Activated CD8-positive, alpha-beta T cell treated with anti-CD3 and anti-CD28 coated beads for 36 hours (primary cell): ENCODE measurements at regions of chr3 and their contacts with region 1.

Region 1: DNA sequence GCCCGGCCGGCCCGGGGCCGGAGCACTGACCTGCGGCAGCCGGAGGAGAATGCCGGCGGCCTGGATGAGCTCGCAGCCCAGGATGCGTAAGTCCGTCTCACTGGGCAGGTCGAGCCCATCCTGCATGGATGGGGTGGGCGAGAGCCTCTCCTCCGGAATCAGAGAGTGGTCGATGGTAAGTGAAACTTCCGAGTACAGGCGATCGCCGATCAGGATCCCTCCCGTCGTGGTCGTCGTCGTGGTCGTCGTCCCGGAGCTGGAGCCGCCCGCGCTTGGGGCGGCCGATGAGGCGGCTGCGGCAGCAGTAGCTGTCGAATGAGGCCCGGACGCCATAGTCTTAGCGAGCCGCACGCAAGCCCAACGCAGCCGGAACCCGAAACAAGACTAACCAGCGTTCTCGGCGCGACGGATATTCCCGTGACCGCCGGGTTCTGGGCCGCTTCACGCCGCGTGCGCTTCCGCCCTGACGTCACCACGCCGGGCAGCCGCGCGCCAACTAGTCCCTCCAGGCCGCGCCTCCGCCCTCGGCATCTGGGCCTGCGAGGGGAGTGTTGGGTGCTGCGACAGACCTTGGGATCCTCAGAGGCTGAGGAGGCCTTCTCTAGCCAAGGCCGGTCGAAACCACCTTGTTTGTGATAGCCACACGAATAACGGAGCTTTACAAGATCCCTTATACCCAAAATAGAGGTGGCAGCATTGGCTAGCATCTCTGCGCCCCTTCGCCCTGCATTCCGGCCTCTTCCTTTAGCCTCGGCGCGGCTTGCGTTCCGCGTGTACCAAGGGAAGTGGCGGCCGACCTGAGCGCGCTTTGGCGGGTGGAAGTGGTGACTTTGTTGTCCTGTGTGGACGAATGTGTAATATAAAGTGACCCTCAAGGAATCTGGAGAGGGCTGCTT is at the start of gene CCNL1:
- DNase-seq: peak; percentile 96
- ATAC-seq: peak; percentile 79
- H3K4me3 Mint-ChIP-seq: peak within 1 kb of the TSS; percentile 97
- H3K27ac Mint-ChIP-seq: peak within 1 kb of the TSS; percentile 99
- H3K4me1 Mint-ChIP-seq: peaks cover 45% of the 10 kb centered on the region
- H3K27me3 Mint-ChIP-seq: no peaks in the 10 kb centered on the region
- CTCF ChIP-seq: no peak
- total RNA-seq, gene CCNL1: 180 to 191 TPM

Region 2: GRCh38 chr3:157130467-157131251 is 29.4 kb before region 1 on chr3:
- CTCF ChIA-PET with region 1: interaction called, 3 read pairs
- POLR2A ChIA-PET with region 1: interaction called, 26 read pairs
- intact Hi-C with region 1: no loop called
- DNase-seq: peak; percentile 90
- ATAC-seq: peak; percentile 26
- H3K4me3 Mint-ChIP-seq: peak overlapping the region; percentile 50
- H3K27ac Mint-ChIP-seq: peak overlapping the region; percentile 96
- H3K4me1 Mint-ChIP-seq: peaks cover 74% of the 10 kb centered on the region
- H3K27me3 Mint-ChIP-seq: no peaks in the 10 kb centered on the region
- CTCF ChIP-seq: peak; percentile 77

Region 3: GRCh38 chr3:157148196-157148889 is 11.7 kb before region 1 on chr3:
- CTCF ChIA-PET with region 1: interaction called, 6 read pairs
- POLR2A ChIA-PET with region 1: interaction called, 106 read pairs
- intact Hi-C with region 1: no loop called
- DNase-seq: no peak
- ATAC-seq: peak; percentile 22
- H3K4me3 Mint-ChIP-seq: no peak overlapping the region
- H3K27ac Mint-ChIP-seq: peak overlapping the region; percentile 73
- H3K4me1 Mint-ChIP-seq: peaks cover 46% of the 10 kb centered on the region
- H3K27me3 Mint-ChIP-seq: no peaks in the 10 kb centered on the region
- CTCF ChIP-seq: no peak

Region 4: GRCh38 chr3:157180262-157180661 is 20.3 kb after region 1 on chr3:
- CTCF ChIA-PET with region 1: interaction called, 47 read pairs
- POLR2A ChIA-PET with region 1: interaction called, 403 read pairs
- intact Hi-C with region 1: loop called (anchors 1 kb)
- DNase-seq: no peak
- ATAC-seq: no peak
- H3K4me3 Mint-ChIP-seq: no peak overlapping the region
- H3K27ac Mint-ChIP-seq: no peak overlapping the region
- H3K4me1 Mint-ChIP-seq: peaks cover 24% of the 10 kb centered on the region
- H3K27me3 Mint-ChIP-seq: no peaks in the 10 kb centered on the region
- CTCF ChIP-seq: no peak

Region 5: DNA sequence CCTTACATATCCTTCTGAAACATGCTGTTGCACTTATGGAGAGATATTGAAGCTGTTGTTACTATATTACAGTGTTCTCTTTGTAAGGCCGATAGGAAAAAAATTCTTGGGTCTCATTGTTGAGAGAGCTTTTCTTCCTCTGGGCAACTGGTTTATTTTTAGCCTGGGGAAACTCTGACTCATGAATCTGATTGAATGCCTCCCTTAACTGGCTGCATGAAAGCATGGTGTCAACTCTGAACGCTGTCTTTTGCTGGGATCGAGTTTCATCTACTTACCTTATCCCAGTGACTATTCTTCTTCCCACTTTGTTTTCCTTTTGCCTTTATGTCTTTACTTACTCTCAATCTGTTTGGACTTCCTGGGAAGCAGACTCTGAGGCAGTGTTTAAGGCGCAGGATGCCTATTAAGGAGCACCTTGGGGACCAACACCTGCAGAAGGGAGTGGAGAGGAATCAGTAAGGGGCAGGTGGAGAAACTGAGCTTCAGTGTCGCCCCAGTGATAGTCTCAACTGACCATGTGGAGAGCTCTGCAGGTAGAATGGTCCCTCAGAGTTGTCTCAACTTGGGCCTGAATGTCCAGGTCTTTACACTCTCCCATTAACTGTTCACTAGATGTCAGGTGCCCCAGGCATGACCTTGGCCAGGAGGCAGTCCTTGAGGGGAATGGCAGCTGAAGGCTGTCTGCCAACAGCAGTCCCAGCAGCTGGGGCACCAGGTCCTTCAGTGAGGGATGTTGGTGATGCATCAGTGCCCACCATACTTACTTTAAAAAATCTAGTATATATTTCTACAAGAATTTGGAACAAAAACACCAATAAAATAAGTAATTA is 88.8 kb after region 1 on chr3:
- CTCF ChIA-PET with region 1: no interaction called
- POLR2A ChIA-PET with region 1: no interaction called
- intact Hi-C with region 1: no loop called
- DNase-seq: no peak
- ATAC-seq: peak; percentile 42
- H3K4me3 Mint-ChIP-seq: no peak overlapping the region
- H3K27ac Mint-ChIP-seq: no peak overlapping the region
- H3K4me1 Mint-ChIP-seq: peaks cover 9% of the 10 kb centered on the region
- H3K27me3 Mint-ChIP-seq: no peaks in the 10 kb centered on the region
- CTCF ChIP-seq: no peak

Region 6: DNA sequence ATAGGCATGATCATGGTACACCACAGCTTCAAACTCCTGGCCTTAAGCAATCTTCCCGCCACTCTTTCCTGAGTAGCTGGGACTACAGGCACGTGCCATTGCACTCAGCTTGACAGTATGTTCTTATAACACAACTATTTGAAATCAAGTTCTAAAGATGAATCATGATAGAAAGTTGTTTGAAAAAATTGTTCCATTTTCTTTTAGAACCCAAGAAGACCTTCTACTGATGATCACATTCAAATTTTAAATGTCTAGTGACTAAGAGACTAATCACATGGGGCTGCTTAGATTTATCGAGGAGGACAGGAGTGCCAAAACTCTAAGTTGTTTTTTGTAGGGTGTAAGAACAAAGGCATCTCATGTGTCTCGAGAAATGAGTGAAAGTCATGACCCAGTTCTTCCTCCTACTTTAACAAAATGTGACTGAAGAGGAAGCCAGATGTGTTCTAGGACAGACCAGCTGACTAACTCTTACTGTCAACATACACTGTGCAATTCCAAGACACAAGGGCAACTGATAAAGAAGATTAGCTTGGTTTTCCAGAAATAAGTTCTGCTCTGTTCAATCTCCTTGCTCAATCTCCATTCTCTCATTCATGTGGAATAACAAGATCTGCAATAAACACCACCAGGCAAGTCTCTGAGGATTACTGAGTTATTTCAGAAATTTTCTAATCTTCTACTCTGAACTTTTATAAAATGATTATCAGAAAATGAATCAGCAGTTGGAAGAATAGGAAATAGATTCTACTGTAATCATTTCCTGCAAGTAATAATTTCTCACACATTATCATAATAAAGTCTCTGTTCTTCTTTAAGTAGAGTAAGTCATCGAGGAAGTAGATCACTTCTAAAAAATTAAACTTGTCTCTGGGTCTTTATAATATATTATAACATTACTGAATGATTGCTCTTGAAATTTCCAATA is 122.5 kb after region 1 on chr3:
- CTCF ChIA-PET with region 1: no interaction called
- POLR2A ChIA-PET with region 1: no interaction called
- intact Hi-C with region 1: no loop called
- DNase-seq: no peak
- ATAC-seq: no peak
- H3K4me3 Mint-ChIP-seq: no peak overlapping the region
- H3K27ac Mint-ChIP-seq: no peak overlapping the region
- H3K4me1 Mint-ChIP-seq: peaks cover 4% of the 10 kb centered on the region
- H3K27me3 Mint-ChIP-seq: no peaks in the 10 kb centered on the region
- CTCF ChIP-seq: no peak